ENCODE measurements at regions of chr1 and their contacts with region 1.

Region 1: GRCh38 chr1:28369371-28370238 is at the start of gene PHACTR4:
- DNase-seq: peak; percentile 96
- ATAC-seq: peak; percentile 99
- total RNA-seq, gene PHACTR4: 18.1 TPM

Region 2: DNA sequence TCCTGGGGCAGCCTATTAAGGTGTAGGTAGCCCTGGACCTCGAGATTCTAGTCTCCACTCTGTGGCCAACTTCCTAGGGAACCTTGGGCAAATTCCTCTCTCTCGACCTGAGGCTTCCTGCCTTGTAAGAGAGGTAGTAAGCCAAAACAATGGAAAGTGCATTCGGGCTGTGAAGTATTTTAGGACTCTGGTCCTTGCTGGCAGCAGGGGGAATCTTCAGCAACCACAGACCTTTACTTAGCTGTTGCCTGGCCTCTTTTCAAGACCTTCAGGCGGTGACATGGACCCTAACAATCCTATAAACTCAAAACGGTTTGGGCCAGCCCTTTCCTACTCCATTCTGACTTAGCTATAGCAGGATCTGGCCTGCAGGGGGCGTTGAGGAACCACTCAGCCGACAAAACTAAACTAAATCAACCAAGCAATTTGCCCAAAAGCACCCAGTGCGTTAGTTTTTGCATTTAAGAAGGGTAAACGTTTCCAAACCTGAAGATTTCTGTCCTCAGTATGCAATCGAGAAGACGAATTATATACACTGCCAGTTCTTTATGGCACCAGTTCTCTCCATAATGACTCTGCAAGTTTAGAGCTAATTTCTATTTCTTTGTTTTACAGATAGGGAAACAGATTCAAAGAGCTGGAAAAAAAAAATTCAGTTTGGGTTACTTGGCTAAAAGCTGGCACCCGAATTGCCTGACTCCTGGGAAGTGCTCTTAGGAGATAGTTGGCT is 121.2 kb before region 1 on chr1:
- intact Hi-C with region 1: loop called (anchors 5 kb)
- DNase-seq: peak; percentile 90
- ATAC-seq: peak; percentile 66

Region 3: DNA sequence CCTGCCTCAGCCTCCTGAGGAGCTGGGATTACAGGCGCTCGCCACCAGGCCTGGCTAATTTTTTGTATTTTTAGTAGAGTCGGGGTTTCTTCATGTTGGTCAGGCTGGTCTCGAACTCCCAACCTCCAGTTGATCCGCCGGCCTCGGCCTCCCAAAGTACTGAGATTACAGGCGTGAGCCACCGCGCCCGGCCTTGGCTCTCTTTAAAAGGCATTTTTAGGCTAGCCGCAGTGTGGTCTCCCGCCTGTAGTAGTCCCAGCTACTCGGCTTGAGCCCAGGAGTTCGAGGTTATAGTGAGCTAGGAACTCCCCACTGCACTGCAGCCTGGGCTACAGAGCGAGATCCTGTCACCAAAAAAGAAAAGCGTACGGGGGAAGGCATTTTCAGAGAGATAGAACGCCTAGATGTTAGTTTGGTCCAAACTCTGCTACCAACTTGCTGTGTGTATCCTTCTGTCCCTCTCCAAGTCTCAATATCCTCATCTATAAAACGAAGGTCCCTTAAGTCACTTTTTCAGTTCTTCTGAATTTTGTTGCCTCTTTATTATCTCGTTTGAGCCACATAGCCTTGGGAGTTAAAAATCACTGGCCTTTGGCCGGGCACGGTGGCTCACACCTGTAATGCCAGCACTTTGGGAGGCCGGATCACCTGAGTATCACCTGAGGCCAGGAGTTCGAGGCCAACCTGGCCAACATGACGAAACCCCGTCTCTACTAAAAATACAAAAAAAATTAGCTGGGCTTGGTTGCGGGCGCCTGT is 40.0 kb before region 1 on chr1:
- intact Hi-C with region 1: loop called (anchors 1 kb)
- DNase-seq: no peak
- ATAC-seq: no peak

Region 4: GRCh38 chr1:28602536-28603439 is 233.2 kb after region 1 on chr1:
- intact Hi-C with region 1: loop called (anchors 10 kb)
- DNase-seq: no peak
- ATAC-seq: peak; percentile 58

Measured in Right ventricle myocardium inferior (tissue), 1 donor.